Activated B cell treated with CpG ODN at 0.5 μM for 24 hours (primary cell): ENCODE measurements at regions of chr4 and their contacts with region 1.

Region 1: GRCh38 chr4:83259586-83259985 is 25.0 kb downstream of the COQ2 start:
- DNase-seq: no peak
- ATAC-seq: no peak
- H3K4me3 Mint-ChIP-seq: peak overlapping the region; percentile 3
- H3K27ac Mint-ChIP-seq: peak overlapping the region; percentile 37
- H3K4me1 Mint-ChIP-seq: peaks cover 53% of the 10 kb centered on the region
- H3K27me3 Mint-ChIP-seq: no peaks in the 10 kb centered on the region
- CTCF ChIP-seq: no peak

Region 2: DNA sequence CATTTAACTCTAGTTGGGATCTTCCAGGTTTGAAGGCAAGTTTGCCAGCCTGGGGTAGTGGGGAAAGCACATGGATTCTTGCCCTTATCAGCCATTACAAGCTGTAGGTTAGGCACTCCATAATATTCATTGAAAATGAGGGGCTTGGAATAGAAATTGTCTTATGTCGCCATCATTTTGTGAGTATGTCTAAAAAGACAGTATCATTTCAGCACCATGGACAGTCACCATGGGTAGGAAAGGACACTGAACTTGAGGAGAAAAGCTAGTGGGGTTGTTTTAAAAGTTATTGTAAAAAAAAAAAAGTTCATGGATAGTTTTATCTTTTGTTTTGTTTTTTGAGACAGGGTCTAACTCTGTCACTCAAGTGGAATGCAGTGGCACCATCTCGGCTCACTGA is 1241.9 kb before region 1 on chr4:
- CTCF ChIA-PET with region 1: no interaction called
- POLR2A ChIA-PET with region 1: no interaction called
- intact Hi-C with region 1: no loop called
- DNase-seq: no peak
- ATAC-seq: no peak
- H3K4me3 Mint-ChIP-seq: no peak overlapping the region
- H3K27ac Mint-ChIP-seq: no peak overlapping the region
- H3K4me1 Mint-ChIP-seq: no peaks in the 10 kb centered on the region
- H3K27me3 Mint-ChIP-seq: peaks cover 4% of the 10 kb centered on the region
- CTCF ChIP-seq: no peak

Region 3: GRCh38 chr4:83054928-83055327 is 204.7 kb before region 1 on chr4:
- CTCF ChIA-PET with region 1: interaction called, 14 read pairs
- POLR2A ChIA-PET with region 1: interaction called, 3 read pairs
- intact Hi-C with region 1: loop called (anchors 1 kb)
- DNase-seq: no peak
- ATAC-seq: no peak
- H3K4me3 Mint-ChIP-seq: no peak overlapping the region
- H3K27ac Mint-ChIP-seq: no peak overlapping the region
- H3K4me1 Mint-ChIP-seq: peaks cover 2% of the 10 kb centered on the region
- H3K27me3 Mint-ChIP-seq: no peaks in the 10 kb centered on the region
- CTCF ChIP-seq: no peak

Region 4: GRCh38 chr4:83074086-83074704 is 185.4 kb before region 1 on chr4:
- CTCF ChIA-PET with region 1: interaction called, 76 read pairs
- POLR2A ChIA-PET with region 1: interaction called, 24 read pairs
- intact Hi-C with region 1: loop called (anchors 1 kb)
- DNase-seq: no peak
- ATAC-seq: peak; percentile 81
- H3K4me3 Mint-ChIP-seq: peak overlapping the region; percentile 53
- H3K27ac Mint-ChIP-seq: peak overlapping the region; percentile 76
- H3K4me1 Mint-ChIP-seq: peaks cover 26% of the 10 kb centered on the region
- H3K27me3 Mint-ChIP-seq: no peaks in the 10 kb centered on the region
- CTCF ChIP-seq: peak; percentile 52

Region 5: DNA sequence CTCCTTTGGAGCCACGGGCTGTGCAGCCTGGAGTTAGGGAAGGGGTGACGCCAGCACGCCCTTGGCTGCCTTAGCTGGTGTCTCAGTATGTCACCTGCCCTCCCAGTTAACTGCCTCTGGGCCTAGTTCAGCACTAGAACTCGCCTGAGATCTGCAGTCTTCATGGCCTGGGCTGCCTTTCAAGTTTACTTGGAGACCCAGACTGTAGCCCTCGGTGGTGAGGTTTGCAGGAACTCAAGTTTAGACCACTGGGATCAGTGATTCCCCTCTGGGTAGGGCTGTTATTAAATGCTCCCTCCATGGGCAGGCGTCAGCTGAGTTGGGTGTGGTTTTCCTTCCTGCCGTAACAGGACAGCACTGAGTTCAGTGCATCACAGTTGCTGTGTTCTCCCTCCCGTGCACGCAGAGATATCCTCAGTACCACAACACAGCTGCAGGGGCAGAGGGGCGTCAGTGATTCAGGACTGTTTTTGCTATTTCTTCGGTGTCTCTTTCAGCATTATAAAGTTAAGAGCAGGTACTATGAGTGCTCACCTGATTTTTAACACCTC is 175.6 kb before region 1 on chr4:
- CTCF ChIA-PET with region 1: interaction called, 20 read pairs
- POLR2A ChIA-PET with region 1: interaction called, 8 read pairs
- intact Hi-C with region 1: loop called (anchors 1 kb)
- DNase-seq: peak; percentile 33
- ATAC-seq: peak; percentile 96
- H3K4me3 Mint-ChIP-seq: peak overlapping the region; percentile 57
- H3K27ac Mint-ChIP-seq: peak overlapping the region; percentile 90
- H3K4me1 Mint-ChIP-seq: peaks cover 50% of the 10 kb centered on the region
- H3K27me3 Mint-ChIP-seq: no peaks in the 10 kb centered on the region
- CTCF ChIP-seq: no peak

Region 6: DNA sequence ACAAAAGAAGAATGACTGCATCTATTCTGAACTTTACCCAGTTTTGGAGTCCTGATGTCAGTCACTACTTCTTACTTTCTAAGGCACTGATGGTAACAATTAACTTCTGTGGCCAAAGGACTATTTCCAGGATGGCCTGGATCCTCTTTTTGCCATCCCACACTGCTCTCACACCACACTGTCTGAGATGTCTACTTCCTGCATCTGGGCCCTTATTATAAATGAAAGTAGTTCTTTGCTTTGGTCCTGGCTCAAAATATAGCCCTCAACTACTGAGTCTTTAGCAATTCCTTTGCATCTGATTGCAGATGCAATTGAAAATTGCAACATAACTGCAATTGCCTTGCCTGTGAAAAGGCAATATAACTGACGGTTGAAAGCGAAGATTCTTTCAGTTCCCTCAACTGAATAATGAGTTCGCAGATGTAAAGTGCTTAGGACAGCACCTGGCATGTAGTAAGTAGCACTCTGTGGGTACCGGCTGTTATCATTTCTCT is 19.2 kb before region 1 on chr4:
- CTCF ChIA-PET with region 1: no interaction called
- POLR2A ChIA-PET with region 1: no interaction called
- intact Hi-C with region 1: loop called (anchors 2 kb)
- DNase-seq: no peak
- ATAC-seq: peak; percentile 86
- H3K4me3 Mint-ChIP-seq: peak overlapping the region; percentile 33
- H3K27ac Mint-ChIP-seq: peak overlapping the region; percentile 72
- H3K4me1 Mint-ChIP-seq: peaks cover 70% of the 10 kb centered on the region
- H3K27me3 Mint-ChIP-seq: no peaks in the 10 kb centered on the region
- CTCF ChIP-seq: no peak

Region 7: DNA sequence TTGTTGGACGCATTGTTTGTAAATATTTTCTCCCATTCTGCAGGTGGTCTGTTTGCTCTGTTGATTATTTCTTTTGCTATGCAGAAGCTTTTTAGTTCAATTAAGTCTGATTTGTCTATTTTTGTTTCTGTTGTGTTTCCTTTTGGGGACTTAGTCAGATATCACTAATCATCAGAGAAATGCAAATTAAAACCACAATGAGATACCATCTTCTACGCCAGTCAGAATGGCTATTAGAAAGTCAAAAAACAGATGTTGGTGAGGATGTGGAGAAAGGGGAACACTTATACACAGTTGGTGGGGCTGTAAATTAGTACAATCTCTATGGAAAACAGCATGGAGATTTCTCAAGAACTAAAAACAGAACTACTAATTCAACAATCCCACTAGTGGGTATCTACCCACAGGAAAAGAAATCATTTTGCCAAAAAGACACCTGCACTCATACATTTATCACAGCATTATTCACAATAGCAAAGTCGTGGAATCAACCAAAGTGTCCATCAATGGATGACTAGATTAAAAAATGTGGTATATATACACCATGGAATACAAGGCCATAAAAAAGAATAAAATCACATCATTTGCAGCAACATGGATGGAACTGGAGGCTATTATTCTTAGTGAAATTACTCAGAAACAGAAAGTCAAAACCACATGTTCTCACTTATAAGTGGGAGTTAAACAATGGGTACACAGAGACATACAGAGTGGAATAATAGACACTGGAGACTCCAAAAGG is 16.9 kb after region 1 on chr4:
- CTCF ChIA-PET with region 1: interaction called, 51 read pairs
- POLR2A ChIA-PET with region 1: interaction called, 3 read pairs
- intact Hi-C with region 1: no loop called
- DNase-seq: no peak
- ATAC-seq: peak; percentile 57
- H3K4me3 Mint-ChIP-seq: peak overlapping the region; percentile 59
- H3K27ac Mint-ChIP-seq: peak overlapping the region; percentile 89
- H3K4me1 Mint-ChIP-seq: peaks cover 54% of the 10 kb centered on the region
- H3K27me3 Mint-ChIP-seq: no peaks in the 10 kb centered on the region
- CTCF ChIP-seq: no peak